T-cell (primary cell): ENCODE measurements at regions of chr9 and their contacts with region 1.

Region 1: GRCh38 chr9:121321016-121321503 is 49.0 kb downstream of the STOM start:
- DNase-seq: peak in 3 of 35 experiments; percentile 10 to 32 (median 14)
- ATAC-seq: no peak
- H3K4me3 ChIP-seq: no peak overlapping the region
- H3K4me3 Mint-ChIP-seq: no peak overlapping the region
- H3K27ac ChIP-seq: no peak overlapping the region
- H3K27ac Mint-ChIP-seq: no peak overlapping the region
- H3K4me1 ChIP-seq: peaks cover 0 to 25% of the 10 kb centered on the region in 2 experiments
- H3K4me1 Mint-ChIP-seq: peaks cover 13 to 31% (median 18%) of the 10 kb centered on the region in 3 donors
- H3K27me3 ChIP-seq: peaks cover 0 to 2% of the 10 kb centered on the region in 2 experiments
- H3K27me3 Mint-ChIP-seq: no peaks in the 10 kb centered on the region

Region 2: DNA sequence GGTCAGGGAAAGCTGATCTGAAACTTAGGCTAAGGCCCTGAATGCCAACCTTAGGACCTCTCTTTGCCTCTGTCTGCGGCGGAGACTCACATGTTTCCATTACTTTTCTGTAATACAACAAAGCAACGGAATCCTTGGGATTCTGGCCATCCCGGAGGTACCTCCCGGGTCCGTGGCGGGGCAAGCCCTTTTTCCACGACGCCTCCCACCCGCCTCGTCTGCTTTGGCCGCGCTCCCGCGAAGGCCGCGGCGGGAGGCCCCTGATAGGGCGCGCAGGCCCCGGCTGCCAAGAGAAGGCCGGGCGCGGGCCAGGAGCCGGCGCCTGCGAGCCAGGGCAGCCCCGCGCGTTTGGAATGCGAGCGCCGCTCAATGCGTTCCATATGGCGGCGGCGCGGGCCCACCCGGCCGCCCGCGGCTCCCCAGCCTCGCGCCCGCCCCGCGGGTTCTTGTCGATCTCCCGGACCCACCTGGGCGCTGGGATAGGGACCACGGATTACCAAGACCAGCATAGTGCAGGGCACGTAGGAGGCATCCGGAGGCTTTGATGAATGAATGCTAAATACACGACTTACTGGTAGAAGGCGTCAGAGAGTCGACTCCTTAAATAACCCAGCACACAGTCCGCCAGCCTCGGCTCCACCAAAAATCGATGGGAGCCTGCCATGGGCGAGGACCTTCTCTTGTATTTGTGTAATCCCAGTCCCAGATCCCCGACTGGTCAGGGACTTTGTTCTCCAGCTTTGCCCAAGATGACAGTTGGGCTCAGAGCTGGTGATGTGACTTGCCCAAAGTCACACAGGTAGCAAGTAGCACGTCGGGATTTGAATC is 426.5 kb before region 1 on chr9:
- CTCF ChIA-PET with region 1: no interaction called
- POLR2A ChIA-PET with region 1: no interaction called
- DNase-seq: no peak
- ATAC-seq: no peak
- H3K4me3 ChIP-seq: no peak overlapping the region
- H3K4me3 Mint-ChIP-seq: no peak overlapping the region
- H3K27ac ChIP-seq: peak overlapping the region; percentile 96
- H3K27ac Mint-ChIP-seq: peak overlapping the region; percentile 98
- H3K4me1 ChIP-seq: peaks cover 50 to 80% of the 10 kb centered on the region in 2 experiments
- H3K4me1 Mint-ChIP-seq: peaks cover 58 to 85% (median 77%) of the 10 kb centered on the region in 3 donors
- H3K27me3 ChIP-seq: no peaks in the 10 kb centered on the region
- H3K27me3 Mint-ChIP-seq: no peaks in the 10 kb centered on the region

Region 3: DNA sequence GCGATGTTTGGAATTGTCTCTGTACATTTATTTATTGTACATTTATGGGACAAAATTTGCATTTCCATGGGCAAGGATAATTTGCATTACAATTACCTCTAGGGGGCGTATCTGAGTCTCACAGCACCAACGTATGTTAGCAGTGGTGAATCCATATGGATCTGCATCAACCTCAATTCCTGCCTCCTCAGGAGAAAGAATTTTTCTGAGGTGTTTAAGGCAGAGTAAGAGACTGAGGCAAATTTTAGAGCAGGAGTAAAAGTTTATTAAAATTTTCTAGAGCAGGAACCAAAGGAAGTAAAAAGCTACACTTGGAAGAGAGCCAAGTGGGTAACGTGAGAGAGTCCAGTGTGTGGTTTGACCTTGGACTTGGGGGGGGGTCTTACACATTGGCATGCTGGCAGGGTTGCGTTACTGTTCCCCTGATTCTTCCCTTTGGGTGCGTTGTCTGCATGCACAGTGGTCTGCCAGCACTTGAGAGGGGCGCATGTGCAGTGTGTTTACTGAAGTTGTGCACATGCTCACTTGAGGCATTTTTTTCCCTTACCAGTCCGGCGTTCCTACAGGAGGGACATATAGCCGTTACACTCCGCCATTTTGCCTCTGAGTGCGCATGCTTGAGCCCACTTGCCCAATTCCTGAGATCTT is 98.4 kb before region 1 on chr9:
- CTCF ChIA-PET with region 1: no interaction called
- POLR2A ChIA-PET with region 1: no interaction called
- DNase-seq: peak in 1 of 35 experiments; percentile 36
- ATAC-seq: no peak
- H3K4me3 ChIP-seq: no peak overlapping the region
- H3K4me3 Mint-ChIP-seq: no peak overlapping the region
- H3K27ac ChIP-seq: no peak overlapping the region
- H3K27ac Mint-ChIP-seq: no peak overlapping the region
- H3K4me1 ChIP-seq: no peaks in the 10 kb centered on the region
- H3K4me1 Mint-ChIP-seq: no peaks in the 10 kb centered on the region
- H3K27me3 ChIP-seq: no peaks in the 10 kb centered on the region
- H3K27me3 Mint-ChIP-seq: no peaks in the 10 kb centered on the region

Region 4: GRCh38 chr9:121376214-121376830 is 55.3 kb after region 1 on chr9:
- CTCF ChIA-PET with region 1: interaction called, 8 to 68 read pairs
- POLR2A ChIA-PET with region 1: no interaction called
- DNase-seq: peak in 1 of 35 experiments; percentile 48
- ATAC-seq: no peak
- H3K4me3 ChIP-seq: no peak overlapping the region
- H3K4me3 Mint-ChIP-seq: no peak overlapping the region
- H3K27ac ChIP-seq: no peak overlapping the region
- H3K27ac Mint-ChIP-seq: no peak overlapping the region
- H3K4me1 ChIP-seq: no peaks in the 10 kb centered on the region
- H3K4me1 Mint-ChIP-seq: peaks cover 0 to 22% (median 16%) of the 10 kb centered on the region in 3 donors
- H3K27me3 ChIP-seq: no peaks in the 10 kb centered on the region
- H3K27me3 Mint-ChIP-seq: no peaks in the 10 kb centered on the region

Region 5: DNA sequence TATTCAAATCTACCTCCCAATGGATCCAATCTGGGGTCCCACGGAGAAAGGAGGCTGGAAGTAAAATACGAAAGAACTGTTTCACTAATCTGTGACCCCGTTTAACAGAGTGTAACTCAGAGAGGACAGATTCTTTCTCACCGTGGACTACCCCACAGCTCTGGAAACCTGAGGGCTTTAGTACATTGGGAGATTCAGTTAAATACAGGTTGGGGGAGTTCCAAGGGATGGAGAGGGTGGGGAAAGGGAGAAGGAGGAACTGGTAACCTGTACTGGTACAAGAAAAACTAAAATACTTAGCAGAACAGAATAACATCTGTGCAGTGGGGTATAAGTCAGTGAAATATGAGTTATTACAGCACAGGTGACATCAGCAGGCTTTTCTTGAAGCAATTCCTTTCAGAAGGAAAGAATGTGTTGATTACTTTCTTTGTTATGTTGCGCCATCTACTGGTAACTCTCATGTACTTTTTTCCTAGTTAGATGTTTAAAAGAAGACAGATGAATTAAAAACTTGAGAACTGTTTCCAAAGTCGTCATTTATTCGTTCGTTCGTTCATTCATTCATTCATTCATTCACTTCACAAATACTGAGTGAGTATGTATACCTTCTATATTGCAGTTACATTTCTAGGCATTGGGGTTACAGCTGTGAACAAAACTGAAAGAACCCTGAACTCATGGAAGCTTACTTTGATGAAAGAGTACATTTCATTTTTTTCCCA is 79.0 kb after region 1 on chr9:
- CTCF ChIA-PET with region 1: interaction called, 41 to 109 read pairs
- POLR2A ChIA-PET with region 1: interaction called in 1 of 2 experiments, 4 read pairs
- DNase-seq: peak in 2 of 35 experiments; percentile 7 to 82
- ATAC-seq: peak in 2 of 4 experiments; percentile 50 to 68
- H3K4me3 ChIP-seq: no peak overlapping the region
- H3K4me3 Mint-ChIP-seq: no peak overlapping the region
- H3K27ac ChIP-seq: no peak overlapping the region
- H3K27ac Mint-ChIP-seq: no peak overlapping the region
- H3K4me1 ChIP-seq: no peaks in the 10 kb centered on the region
- H3K4me1 Mint-ChIP-seq: no peaks in the 10 kb centered on the region
- H3K27me3 ChIP-seq: no peaks in the 10 kb centered on the region
- H3K27me3 Mint-ChIP-seq: peaks cover 0 to 3% of the 10 kb centered on the region in 2 donors

Region 6: GRCh38 chr9:121464968-121465367 is 143.9 kb after region 1 on chr9:
- CTCF ChIA-PET with region 1: no interaction called
- POLR2A ChIA-PET with region 1: no interaction called
- DNase-seq: no peak
- ATAC-seq: no peak
- H3K4me3 ChIP-seq: no peak overlapping the region
- H3K4me3 Mint-ChIP-seq: no peak overlapping the region
- H3K27ac ChIP-seq: no peak overlapping the region
- H3K27ac Mint-ChIP-seq: no peak overlapping the region
- H3K4me1 ChIP-seq: no peaks in the 10 kb centered on the region
- H3K4me1 Mint-ChIP-seq: no peaks in the 10 kb centered on the region
- H3K27me3 ChIP-seq: peaks cover 0 to 15% of the 10 kb centered on the region in 2 experiments
- H3K27me3 Mint-ChIP-seq: peaks cover 30 to 35% of the 10 kb centered on the region in 2 donors

Region 7: DNA sequence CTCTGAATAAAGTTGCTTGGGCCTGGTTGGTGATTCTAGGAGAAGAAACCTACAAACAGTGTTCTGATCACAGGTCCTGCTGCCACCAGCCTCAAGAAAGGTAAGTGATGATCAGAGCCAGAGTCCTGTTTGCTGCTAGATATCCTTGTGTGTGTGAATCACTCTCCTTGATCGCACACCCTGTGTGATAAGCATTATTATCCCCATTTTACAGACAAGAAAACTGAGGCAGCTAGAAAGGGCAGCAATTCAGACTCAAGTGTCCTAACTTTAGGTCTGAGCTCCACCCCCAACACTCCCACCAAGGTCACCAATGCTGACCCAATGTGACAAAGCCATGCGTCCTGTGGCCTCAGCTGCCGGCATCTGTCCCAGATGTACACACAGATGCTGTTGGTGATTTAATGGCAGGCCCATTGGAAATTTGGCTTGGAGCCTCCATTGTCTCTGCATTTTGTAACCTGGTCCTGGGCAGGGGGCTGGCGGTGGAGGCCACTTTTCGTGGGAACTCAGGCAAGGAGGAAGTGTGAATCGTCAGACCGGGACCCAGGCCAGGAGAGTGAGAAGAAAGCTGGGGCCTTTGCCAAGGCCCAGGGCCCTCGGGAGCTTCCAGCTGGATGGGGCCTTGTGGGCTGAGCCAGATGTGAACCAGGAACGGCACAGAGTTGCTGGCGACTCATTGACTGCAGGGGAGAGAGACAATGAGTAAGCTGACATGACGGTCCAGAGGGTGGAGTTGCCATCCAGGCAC is 208.4 kb after region 1 on chr9:
- CTCF ChIA-PET with region 1: no interaction called
- POLR2A ChIA-PET with region 1: no interaction called
- DNase-seq: no peak
- ATAC-seq: no peak
- H3K4me3 ChIP-seq: no peak overlapping the region
- H3K4me3 Mint-ChIP-seq: no peak overlapping the region
- H3K27ac ChIP-seq: no peak overlapping the region
- H3K27ac Mint-ChIP-seq: no peak overlapping the region
- H3K4me1 ChIP-seq: no peaks in the 10 kb centered on the region
- H3K4me1 Mint-ChIP-seq: no peaks in the 10 kb centered on the region
- H3K27me3 ChIP-seq: peaks cover 0 to 22% of the 10 kb centered on the region in 2 experiments
- H3K27me3 Mint-ChIP-seq: peaks cover 13 to 20% of the 10 kb centered on the region in 2 donors